ENCODE measurements at regions of chr1 and their contacts with region 1.

Region 1: GRCh38 chr1:188682424-188682913 is 1795.2 kb downstream of the BRINP3 start:
- DNase-seq: no peak
- ATAC-seq: no peak

Region 2: DNA sequence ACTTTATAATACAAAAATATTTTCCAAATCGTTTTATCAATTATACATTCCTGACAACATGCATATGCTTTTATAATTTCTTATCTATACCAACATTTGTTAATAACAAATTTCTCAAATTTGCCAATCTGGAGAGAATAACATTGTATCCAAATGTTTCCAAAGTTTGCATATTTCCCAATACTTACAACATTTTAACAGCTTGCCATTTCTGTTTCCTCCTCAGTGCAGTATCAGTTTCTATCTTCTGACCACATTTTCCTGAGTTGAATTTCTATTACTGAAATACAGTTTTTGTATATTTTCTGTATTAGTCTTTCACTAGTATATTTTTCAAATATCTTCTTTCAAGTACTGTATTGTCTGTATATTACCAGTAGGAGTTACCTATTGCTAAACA is 259.4 kb before region 1 on chr1:
- intact Hi-C with region 1: loop called (anchors 5 kb)
- DNase-seq: no peak
- ATAC-seq: no peak

Region 3: DNA sequence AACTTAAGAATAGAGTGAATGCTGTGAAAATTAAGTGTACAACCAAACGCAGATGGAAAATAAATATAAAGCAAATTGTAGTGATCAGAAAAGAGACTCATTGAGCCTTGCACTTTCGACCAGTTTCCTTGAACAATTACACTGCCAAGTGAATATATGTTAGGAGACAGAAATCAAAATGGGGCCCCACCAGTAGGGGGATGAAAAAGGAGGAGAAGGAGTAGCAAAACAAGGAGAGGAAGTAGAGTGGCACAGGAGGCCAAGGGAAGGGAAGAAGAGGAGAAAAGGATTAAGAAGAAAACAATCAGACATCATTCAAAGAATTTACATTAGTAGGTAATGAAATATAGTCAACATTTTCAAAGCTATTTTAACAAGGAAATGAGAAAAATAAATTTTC is 83.2 kb before region 1 on chr1:
- intact Hi-C with region 1: no loop called
- DNase-seq: no peak
- ATAC-seq: no peak